Psoas muscle (tissue), 8 donors: ENCODE measurements at regions of chr4 and their contacts with region 1.

Region 1: DNA sequence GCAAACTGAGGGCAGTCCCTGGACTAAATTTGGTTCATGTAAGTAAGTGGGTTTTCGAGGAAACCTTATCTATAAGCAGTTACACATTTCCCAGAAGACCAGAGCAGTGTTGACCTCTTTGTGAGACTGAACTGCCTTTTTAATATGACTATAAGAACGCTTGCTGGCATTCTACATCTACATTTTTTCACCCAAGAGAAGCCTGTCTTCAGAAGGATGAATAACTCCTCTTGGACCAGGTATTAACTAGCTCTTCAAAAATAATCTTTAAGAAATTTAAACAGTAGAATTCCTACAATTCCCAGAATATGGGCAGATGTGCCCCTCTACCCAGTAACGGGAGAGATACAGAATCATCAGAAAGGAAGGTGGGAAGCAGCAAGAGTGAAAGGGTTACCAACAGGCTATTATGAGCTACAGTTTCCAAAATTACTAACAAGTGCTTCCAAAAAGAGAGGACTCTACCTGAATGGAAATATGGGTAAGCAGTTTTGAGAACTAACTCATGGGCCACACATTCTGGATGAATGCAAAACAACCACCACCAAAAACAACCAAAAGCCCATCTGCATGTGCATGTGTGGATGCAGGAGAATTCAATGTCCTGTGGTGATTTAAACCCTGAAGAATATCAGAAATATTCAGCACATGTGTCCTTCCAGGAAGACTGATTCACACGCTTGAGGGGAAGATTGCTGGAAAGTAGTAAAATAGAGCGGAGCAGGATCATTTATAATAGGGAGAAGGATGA is 17.4 kb downstream of the BBS12 start:
- DNase-seq: no peak
- ATAC-seq: no peak
- H3K4me3 ChIP-seq: no peak overlapping the region
- H3K27ac ChIP-seq: no peak overlapping the region
- H3K4me1 ChIP-seq: no peaks in the 10 kb centered on the region
- H3K27me3 ChIP-seq: no peaks in the 10 kb centered on the region
- CTCF ChIP-seq: no peak

Region 2: DNA sequence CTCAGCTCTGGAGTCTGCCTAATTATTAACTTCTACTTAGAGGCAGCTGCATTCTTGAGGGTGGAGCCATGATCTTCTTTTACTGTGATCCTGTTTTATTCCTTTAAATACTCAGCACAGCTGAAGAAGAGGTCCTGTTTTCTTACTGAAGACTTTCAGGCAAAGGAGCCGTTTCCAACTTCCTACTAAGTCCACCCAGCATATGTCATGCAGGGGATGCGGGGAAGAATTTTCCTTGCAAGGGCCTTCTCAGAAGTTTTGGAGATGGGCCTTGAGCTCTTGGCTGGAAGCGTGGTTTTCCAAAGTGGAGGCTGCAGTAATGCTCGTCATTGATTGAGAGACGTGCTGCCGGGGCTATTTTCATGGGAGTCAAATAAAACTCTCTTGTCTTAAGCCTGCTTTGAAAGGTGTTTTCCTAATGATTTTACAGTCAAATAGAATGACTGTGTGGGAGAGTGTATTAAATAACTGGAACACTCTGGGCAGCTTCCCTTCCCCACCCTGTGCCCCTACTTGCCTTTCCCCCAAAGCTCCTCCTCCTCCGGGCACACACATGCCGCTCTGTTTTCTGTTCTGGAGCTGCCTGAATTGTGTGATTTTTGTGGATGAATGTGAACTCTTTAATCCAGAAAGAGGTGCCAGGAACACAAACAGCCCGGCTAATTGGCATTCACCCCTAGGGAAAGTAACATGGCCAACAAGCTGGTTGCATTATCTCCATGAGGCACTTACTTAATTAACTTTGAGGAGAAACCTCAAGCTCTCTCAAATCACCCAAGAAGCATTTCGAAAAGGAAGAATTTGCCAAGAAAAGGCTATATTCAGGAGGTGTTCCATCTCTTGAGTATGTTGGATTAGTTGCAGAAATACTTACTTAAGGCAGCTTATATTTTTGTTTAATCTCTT is 104.8 kb after region 1 on chr4:
- intact Hi-C with region 1: no loop called
- DNase-seq: no peak
- ATAC-seq: peak in 2 of 4 donors; percentile 51 to 57
- H3K4me3 ChIP-seq: peak overlapping the region; percentile 21
- H3K27ac ChIP-seq: no peak overlapping the region
- H3K4me1 ChIP-seq: no peaks in the 10 kb centered on the region
- H3K27me3 ChIP-seq: no peaks in the 10 kb centered on the region
- CTCF ChIP-seq: no peak

Region 3: GRCh38 chr4:122898370-122899150 is 148.7 kb after region 1 on chr4:
- intact Hi-C with region 1: no loop called
- DNase-seq: no peak
- ATAC-seq: no peak
- H3K4me3 ChIP-seq: no peak overlapping the region
- H3K27ac ChIP-seq: no peak overlapping the region
- H3K4me1 ChIP-seq: no peaks in the 10 kb centered on the region
- H3K27me3 ChIP-seq: no peaks in the 10 kb centered on the region
- CTCF ChIP-seq: no peak

Region 4: GRCh38 chr4:122914292-122914904 is 164.5 kb after region 1 on chr4:
- intact Hi-C with region 1: loop called in 1 of 2 experiments (anchors 5 kb)
- DNase-seq: no peak
- ATAC-seq: peak in 1 of 4 donors; percentile 54
- H3K4me3 ChIP-seq: no peak overlapping the region
- H3K27ac ChIP-seq: no peak overlapping the region
- H3K4me1 ChIP-seq: no peaks in the 10 kb centered on the region
- H3K27me3 ChIP-seq: no peaks in the 10 kb centered on the region
- CTCF ChIP-seq: peak; percentile 23